ENCODE measurements at regions of chr19 and their contacts with region 1.

Region 1: DNA sequence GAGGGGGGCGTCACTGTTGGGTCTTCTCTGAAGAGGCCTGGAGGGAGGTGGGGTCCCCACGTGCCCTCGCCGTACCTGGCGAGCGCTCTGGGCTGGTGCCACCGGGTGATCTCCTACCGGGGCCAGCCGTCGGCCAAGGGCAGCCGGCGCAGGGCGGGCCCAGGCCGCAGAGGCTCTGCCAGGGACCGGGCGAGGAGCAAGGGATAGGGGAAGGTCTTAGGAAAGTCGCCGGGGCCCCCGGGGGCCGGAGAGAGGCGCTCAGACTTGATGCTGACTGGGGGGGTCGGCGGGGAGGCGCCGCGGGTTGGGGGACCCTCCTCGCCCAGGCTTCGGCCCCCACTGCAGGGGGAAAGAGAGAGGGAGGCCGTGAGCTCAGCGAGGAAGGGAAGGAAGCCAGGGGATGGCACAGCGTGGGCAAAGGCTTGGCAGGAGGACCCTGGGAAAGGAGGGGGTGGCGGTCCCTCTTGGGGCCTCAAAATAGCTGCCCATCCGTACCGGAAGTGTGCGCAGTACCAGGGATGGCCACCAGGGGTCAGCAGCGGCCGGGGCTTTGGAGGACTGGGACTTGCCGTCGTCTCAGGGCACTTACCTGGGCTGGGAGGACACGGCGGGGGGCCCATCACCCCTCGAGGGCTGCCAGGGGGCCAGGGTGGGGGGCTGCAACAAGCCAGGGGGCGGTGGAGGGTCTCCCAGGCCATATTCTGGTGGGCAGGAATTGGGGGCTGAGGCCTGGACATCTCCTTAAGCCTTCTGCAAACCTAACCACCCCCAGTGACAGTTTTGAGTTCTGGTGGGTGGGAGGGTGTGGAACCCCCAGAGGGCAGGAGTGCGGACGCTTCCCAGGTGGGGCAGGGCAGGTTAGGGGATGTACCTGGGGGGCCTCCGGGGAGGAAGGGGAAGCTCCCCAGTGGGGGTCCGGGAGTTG is 7.7 kb upstream of the TMEM161A start:
- DNase-seq: peak; percentile 95
- H3K4me3 ChIP-seq: peak overlapping the region in 3 of 4 donors; percentile 6 to 42 (median 32)
- H3K27ac ChIP-seq: no peak overlapping the region
- H3K4me1 ChIP-seq: peaks cover 4 to 11% (median 8%) of the 10 kb centered on the region in 4 donors
- H3K27me3 ChIP-seq: no peaks in the 10 kb centered on the region
- CTCF ChIP-seq: peak in 2 of 3 experiments; percentile 88 to 91
- EP300 ChIP-seq: no peak
- POLR2A ChIP-seq: no peak

Region 2: GRCh38 chr19:19176950-19177349 is 31.0 kb after region 1 on chr19:
- intact Hi-C with region 1: loop called (anchors 2 kb)
- DNase-seq: no peak
- H3K4me3 ChIP-seq: no peak overlapping the region
- H3K27ac ChIP-seq: no peak overlapping the region
- H3K4me1 ChIP-seq: peaks cover 0 to 7% (median 3%) of the 10 kb centered on the region in 4 donors
- H3K27me3 ChIP-seq: no peaks in the 10 kb centered on the region
- CTCF ChIP-seq: no peak
- EP300 ChIP-seq: no peak
- POLR2A ChIP-seq: no peak

Region 3: GRCh38 chr19:19224852-19225494 is 79.0 kb after region 1 on chr19:
- intact Hi-C with region 1: loop called (anchors 2 kb)
- DNase-seq: no peak
- H3K4me3 ChIP-seq: peak overlapping the region; percentile 37 to 56 (median 46)
- H3K27ac ChIP-seq: no peak overlapping the region
- H3K4me1 ChIP-seq: peaks cover 4 to 12% (median 10%) of the 10 kb centered on the region in 4 donors
- H3K27me3 ChIP-seq: peaks cover 0 to 76% (median 28%) of the 10 kb centered on the region in 4 donors
- CTCF ChIP-seq: peak; percentile 41 to 59 (median 50)
- EP300 ChIP-seq: no peak
- POLR2A ChIP-seq: no peak

Measured in esophagus muscularis mucosa (tissue), 4 donors.